A673 (cell line): ENCODE measurements at regions of chr11 and their contacts with region 1.

Region 1: GRCh38 chr11:43282607-43283440 is 29.0 kb upstream of the API5 start:
- DNase-seq: peak; percentile 84
- H3K4me3 ChIP-seq: peak overlapping the region; percentile 8
- H3K27ac ChIP-seq: no peak overlapping the region
- H3K4me1 ChIP-seq: peaks cover 18% of the 10 kb centered on the region
- H3K27me3 ChIP-seq: no peaks in the 10 kb centered on the region
- CTCF ChIP-seq: peak; percentile 100

Region 2: GRCh38 chr11:41498726-41499125 is 1784.1 kb before region 1 on chr11:
- CTCF ChIA-PET with region 1: no interaction called
- POLR2A ChIA-PET with region 1: no interaction called
- intact Hi-C with region 1: loop called (anchors 1 kb)
- DNase-seq: peak; percentile 47
- H3K4me3 ChIP-seq: no peak overlapping the region
- H3K27ac ChIP-seq: no peak overlapping the region
- H3K4me1 ChIP-seq: peaks cover 31% of the 10 kb centered on the region
- H3K27me3 ChIP-seq: no peaks in the 10 kb centered on the region
- CTCF ChIP-seq: peak; percentile 78

Region 3: DNA sequence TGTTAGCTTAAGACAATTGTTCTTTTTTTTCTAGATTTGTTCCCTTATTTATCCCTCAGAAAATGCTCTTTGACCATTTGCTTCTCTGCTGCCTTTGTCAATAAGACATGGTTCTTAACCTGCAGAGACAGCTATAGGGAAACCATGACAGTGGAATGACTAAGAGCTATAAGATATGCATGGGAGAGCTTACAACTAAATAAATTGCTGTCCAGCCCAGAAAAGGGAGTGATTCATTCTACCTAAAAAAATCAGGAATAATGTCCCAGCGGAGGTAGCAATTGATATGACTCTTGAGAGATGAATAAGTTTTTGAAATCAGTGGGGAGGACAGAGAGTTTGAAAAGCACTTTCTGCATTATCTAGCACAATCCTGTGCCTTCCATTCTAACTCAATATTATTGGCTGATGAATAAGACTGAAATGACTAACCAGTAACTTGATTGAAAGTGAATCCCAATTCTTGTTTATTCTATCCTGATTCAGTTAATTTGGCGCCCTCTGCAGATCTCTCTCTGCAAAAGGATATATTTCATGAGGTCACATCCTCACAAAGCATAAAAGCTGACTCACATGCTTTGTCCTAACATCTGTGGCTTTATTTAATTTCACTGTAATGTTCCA is 651.5 kb before region 1 on chr11:
- CTCF ChIA-PET with region 1: interaction called, 3 read pairs
- POLR2A ChIA-PET with region 1: no interaction called
- intact Hi-C with region 1: loop called (anchors 5 kb)
- DNase-seq: peak; percentile 84
- H3K4me3 ChIP-seq: no peak overlapping the region
- H3K27ac ChIP-seq: no peak overlapping the region
- H3K4me1 ChIP-seq: no peaks in the 10 kb centered on the region
- H3K27me3 ChIP-seq: no peaks in the 10 kb centered on the region
- CTCF ChIP-seq: peak; percentile 86

Region 4: GRCh38 chr11:43053638-43054412 is 229.0 kb before region 1 on chr11:
- CTCF ChIA-PET with region 1: no interaction called
- POLR2A ChIA-PET with region 1: no interaction called
- intact Hi-C with region 1: loop called (anchors 1 kb)
- DNase-seq: peak; percentile 93
- H3K4me3 ChIP-seq: no peak overlapping the region
- H3K27ac ChIP-seq: peak overlapping the region; percentile 88
- H3K4me1 ChIP-seq: peaks cover 32% of the 10 kb centered on the region
- H3K27me3 ChIP-seq: no peaks in the 10 kb centered on the region
- CTCF ChIP-seq: no peak

Region 5: GRCh38 chr11:43376594-43376993 is 93.8 kb after region 1 on chr11:
- CTCF ChIA-PET with region 1: no interaction called
- POLR2A ChIA-PET with region 1: no interaction called
- intact Hi-C with region 1: no loop called
- DNase-seq: peak; percentile 27
- H3K4me3 ChIP-seq: no peak overlapping the region
- H3K27ac ChIP-seq: no peak overlapping the region
- H3K4me1 ChIP-seq: no peaks in the 10 kb centered on the region
- H3K27me3 ChIP-seq: no peaks in the 10 kb centered on the region
- CTCF ChIP-seq: no peak

Region 6: DNA sequence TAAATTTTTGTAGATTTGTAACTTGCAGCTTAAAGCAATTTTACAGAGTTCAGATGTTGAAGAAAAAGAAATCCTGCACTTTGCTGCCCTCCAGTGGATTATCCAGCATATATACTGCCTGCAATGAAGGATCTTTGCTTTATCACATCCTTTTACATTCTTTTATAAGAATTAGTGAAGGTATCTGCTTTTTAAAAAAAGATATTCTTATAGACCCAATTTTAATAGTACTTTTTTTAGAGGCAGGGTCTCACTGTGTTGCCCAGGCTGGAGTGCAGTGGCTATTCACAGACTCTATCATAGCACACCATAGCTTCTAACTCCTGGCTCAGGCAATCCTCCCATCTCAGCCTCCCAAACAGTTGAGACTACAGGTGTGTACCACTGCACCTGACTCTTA is 136.6 kb after region 1 on chr11:
- CTCF ChIA-PET with region 1: interaction called, 3 read pairs
- POLR2A ChIA-PET with region 1: no interaction called
- intact Hi-C with region 1: loop called (anchors 1 kb)
- DNase-seq: peak; percentile 79
- H3K4me3 ChIP-seq: no peak overlapping the region
- H3K27ac ChIP-seq: no peak overlapping the region
- H3K4me1 ChIP-seq: no peaks in the 10 kb centered on the region
- H3K27me3 ChIP-seq: no peaks in the 10 kb centered on the region
- CTCF ChIP-seq: peak; percentile 98